Prostate gland (tissue), 2 donors: ENCODE measurements at regions of chr2 and their contacts with region 1.

Region 1: DNA sequence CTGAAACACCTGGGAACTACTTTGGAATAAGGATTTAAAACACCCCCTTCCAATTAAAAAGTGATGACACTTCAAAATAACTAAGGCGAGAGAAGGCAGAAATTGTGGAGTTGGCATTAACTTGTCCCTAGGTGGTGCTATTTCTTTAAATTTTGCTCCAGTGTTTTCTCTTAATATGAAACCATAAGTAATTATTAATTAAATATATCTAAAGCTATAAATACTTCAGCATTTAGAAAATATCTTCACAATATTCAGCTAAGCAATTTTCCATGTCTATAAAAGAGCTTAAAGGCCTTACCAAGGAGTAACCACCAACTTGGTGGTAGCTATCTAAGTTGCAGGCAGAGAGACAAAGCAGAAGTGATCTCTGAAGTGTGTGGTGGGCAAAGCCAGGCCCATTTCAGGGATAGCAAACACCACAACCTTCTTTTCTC is 186.8 kb upstream of the PGAP1 start:
- DNase-seq: no peak
- H3K4me3 ChIP-seq: no peak overlapping the region
- H3K27ac ChIP-seq: no peak overlapping the region
- H3K4me1 ChIP-seq: no peaks in the 10 kb centered on the region
- H3K27me3 ChIP-seq: no peaks in the 10 kb centered on the region
- CTCF ChIP-seq: peak in 3 of 4 experiments; percentile 58 to 62 (median 62)
- POLR2A ChIP-seq: no peak

Region 2: DNA sequence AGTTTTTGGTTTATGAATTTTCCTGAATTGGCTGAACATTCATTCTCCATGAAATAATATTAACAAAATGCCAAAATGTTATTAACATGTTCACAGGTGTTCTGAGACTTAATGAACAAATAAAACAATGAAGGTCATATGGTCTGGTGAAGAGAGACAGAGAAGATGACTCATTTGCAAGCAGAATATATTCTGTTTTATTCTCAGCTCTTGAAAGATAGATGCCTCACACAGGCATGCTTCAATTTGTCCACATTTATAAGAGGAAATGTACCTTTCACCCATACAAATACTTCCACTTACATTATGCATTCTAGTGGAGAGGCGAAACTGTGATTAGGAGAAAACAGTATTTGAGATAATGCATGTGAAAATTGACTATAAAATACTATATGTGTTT is 111.4 kb before region 1 on chr2:
- intact Hi-C with region 1: no loop called
- DNase-seq: no peak
- H3K4me3 ChIP-seq: no peak overlapping the region
- H3K27ac ChIP-seq: no peak overlapping the region
- H3K4me1 ChIP-seq: no peaks in the 10 kb centered on the region
- H3K27me3 ChIP-seq: no peaks in the 10 kb centered on the region
- CTCF ChIP-seq: no peak
- POLR2A ChIP-seq: no peak

Region 3: GRCh38 chr2:197054437-197054836 is 58.9 kb before region 1 on chr2:
- intact Hi-C with region 1: no loop called
- DNase-seq: no peak
- H3K4me3 ChIP-seq: no peak overlapping the region
- H3K27ac ChIP-seq: no peak overlapping the region
- H3K4me1 ChIP-seq: no peaks in the 10 kb centered on the region
- H3K27me3 ChIP-seq: no peaks in the 10 kb centered on the region
- CTCF ChIP-seq: no peak
- POLR2A ChIP-seq: no peak

Region 4: DNA sequence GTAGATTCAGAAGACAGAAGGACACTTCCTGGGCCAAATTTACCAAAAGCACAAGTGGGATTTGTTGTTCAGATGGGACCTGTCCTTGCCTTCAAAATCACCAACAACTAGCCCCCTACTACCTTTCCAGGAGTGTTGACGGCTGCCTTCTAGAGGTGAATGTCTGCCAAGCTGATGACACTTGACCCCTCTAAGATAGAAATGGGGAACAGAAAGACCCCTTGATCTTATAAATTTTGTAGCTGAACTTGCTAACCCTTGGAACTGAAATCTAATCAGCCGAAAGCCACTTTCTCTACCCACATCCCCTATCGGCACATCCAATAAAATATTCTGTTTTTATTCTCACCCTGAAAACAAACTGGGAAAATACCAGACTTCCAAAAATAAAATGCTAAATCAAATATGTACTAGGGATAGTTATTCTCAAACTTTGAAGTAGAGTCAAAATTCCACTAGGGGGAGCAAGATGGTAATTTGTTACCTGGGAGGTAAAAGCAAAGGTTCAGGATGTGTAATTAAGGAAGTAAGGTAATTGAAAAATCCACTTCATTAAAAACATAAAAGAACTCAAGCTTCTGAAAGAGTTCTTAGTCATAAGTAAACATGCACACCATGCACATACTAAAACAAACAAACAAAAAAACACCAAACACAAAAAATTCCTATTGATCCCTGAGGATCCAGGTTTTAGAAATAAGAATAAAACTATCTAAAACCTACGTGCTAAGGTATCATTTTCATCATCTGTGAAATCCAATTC is 78.1 kb after region 1 on chr2:
- intact Hi-C with region 1: loop called (anchors 5 kb)
- DNase-seq: no peak
- H3K4me3 ChIP-seq: no peak overlapping the region
- H3K27ac ChIP-seq: no peak overlapping the region
- H3K4me1 ChIP-seq: no peaks in the 10 kb centered on the region
- H3K27me3 ChIP-seq: no peaks in the 10 kb centered on the region
- CTCF ChIP-seq: peak; percentile 46 to 81 (median 73)
- POLR2A ChIP-seq: no peak

Region 5: DNA sequence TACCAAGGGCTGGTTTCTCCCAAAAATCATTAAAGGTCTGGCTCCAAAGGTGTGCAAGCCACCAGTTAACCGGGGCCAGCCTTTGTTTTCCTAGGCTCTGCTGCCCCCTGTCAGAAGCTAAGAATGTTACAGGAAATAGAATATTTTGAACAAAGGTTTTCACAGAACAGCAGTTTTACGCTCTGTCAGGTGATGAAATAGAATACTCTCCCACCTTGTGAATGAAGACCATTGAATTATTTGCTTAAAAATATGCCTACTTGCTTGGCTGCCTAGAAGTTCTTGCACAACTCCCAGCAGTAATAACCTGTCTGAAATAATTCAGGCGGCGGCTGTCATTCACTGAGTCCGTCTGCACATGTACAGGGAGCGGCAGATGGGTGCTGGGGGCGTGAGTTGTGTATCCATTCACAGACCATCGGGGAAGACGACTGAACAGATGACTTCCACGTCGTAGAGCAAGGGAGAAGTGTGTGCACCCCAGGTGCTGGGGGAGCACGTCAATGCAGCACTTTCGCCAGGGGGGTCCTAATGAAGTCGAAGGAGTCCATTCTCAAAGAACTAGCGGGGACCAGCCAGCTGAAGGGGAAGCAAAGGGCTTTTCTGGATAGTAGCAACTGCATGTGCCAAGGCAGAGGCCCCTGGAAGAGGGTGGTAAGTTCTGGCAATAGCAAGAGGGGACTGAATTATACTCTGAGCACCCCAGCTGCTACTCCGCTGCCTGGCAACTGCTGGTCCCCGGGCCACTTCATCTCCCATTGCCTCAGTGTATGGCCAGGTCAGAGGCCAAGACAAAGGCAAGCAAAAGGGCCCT is 265.4 kb after region 1 on chr2:
- intact Hi-C with region 1: loop called (anchors 2 kb)
- DNase-seq: peak; percentile 36
- H3K4me3 ChIP-seq: no peak overlapping the region
- H3K27ac ChIP-seq: no peak overlapping the region
- H3K4me1 ChIP-seq: no peaks in the 10 kb centered on the region
- H3K27me3 ChIP-seq: no peaks in the 10 kb centered on the region
- CTCF ChIP-seq: peak in 3 of 4 experiments; percentile 63 to 79 (median 76)
- POLR2A ChIP-seq: no peak